Cardiac septum (tissue), 1 donor: ENCODE measurements at regions of chr19 and their contacts with region 1.

Region 1: DNA sequence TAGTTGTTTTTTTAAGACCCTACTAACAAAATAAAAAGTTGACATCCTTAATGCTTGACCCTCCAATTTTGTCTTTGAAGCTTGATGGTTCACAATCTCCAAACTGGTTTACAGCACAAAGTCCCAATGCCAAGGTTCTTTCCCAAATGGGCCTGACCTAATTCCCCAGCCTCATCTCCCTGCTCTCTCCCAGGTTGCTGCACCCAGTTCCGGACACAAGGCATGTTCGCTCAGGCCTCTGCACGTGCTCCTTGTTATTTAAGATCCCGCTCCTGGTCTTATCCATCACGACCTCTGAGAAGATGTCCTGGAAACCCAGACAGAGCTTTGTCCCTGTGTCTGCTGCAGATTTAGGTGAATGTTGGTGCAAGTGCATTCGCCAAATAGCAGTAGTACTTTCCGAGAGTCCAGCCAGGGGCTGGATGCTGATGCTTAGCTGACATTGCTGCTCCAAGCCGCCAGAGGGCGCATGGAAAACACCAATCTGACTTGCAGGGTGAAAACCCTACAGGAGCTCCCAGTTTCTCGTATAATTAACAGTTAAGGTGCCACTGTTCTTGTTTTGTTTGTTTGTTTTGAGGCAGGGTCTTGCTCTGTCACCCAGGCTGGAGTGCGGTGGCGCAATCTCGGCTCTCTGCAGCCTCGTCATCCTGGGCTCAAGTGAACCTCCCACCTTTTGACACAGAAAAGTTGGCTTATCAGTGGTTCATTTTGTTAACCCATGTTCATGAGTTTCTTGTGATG is 18.5 kb downstream of the LYPD3 start:
- DNase-seq: peak; percentile 90

Region 2: GRCh38 chr19:43408043-43408442 is 38.9 kb before region 1 on chr19:
- intact Hi-C with region 1: no loop called
- DNase-seq: no peak

Region 3: DNA sequence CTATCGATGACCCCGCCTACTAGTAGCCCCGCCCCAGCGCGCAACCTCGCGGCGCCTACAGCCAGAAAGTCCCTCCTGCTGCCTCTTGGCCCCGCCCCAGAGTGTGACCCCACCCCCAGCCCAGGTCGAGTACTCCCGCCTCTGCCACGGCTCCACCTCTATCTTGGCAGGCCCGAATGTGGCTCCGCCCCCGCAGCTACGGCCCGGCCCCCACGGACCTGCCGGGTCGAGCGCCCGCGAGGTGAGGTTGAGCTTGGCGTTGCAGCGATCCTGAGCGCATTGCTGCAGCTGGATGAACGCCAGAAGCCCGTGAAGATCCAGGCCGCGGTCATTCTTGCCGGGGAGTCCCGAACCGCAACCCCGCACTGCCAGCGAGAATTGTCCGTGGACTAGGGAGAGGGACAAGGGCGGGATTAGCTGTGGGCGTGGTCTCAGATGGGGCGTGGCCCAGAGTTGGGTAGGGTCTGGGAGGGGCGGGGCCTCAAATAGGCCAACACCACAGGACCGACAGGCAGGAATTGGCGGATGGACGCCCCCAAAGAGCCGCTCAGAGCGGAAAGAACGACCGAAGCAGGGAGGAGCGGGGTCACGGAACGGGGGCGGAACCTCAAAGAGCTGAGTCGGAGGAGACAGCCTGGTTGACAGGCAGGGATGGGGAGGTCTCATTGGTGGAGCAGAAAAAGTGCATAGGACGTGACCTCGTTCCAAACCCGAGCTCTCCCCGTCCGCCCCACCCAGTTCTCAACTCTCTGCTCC is 16.6 kb after region 1 on chr19:
- intact Hi-C with region 1: no loop called
- DNase-seq: peak; percentile 99

Region 4: DNA sequence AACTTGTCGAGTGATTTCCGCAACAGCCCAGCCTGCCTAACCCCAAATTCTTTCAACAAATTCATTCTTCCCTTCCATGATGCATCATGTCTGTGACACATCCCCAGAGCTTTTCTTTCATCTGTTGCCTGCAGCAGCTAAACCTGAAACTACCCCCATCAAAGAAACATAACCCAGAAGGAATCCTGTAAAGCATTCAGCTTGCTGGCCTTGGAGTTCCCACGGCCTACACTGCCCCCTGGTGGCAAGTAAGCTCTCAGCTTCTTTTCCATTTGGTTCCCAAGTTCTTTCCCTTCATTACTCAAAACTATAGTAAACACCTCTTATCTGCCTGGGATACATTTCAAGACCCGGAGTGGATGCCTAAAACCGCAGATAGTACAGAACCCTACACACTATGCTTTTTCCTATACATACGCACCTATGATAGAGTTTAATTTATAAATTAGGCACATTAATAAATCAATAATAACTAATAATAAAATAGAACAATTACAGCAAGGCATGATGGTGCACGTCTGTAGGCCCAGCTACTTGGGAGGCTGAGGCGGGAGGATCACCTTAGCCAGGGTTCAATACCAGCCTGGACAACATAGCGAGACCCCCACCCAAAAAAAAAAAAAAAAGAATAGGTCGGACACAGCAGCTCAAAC is 72.6 kb after region 1 on chr19:
- intact Hi-C with region 1: loop called (anchors 1 kb)
- DNase-seq: peak; percentile 85